Activated CD8-positive, alpha-beta T cell treated with anti-CD3 and anti-CD28 coated beads, Interleukin-2, amount 10 ng/mL, durations not matched to agents 7 days and 5 days (primary cell): ENCODE measurements at regions of chr9 and their contacts with region 1.

Region 1: DNA sequence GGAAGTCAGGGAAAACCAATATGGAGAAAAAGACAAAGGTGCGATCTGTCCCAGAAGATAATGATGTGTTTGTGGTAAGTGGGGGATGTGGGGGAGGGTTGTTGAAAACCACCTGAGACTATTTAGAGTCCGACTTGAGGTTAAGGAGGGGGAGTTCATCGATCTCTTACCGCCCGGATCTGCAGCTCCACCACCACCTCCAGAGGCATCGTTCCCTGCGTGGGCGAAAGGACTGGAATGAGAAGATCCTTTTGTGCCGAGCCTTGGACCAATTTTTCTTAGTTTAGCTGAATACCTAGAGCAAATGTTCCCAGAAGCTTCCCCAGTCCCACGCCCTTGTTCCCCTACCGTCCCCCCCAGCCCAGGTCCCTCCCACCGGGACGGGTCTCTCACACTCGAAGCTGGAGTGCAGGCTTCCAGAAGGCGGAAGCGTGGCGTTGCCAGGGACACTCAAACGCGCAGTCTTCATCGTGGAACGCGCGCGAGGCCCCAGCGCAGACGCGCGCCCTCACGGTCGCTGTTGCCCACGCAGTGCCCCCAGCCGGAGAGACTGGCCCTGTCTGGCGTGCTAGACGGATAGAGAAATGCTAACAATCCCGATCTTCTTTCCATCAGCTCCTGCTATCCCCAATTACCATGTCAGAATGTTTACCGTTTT is at the start of gene SPATA6L:
- DNase-seq: peak; percentile 45
- ATAC-seq: peak; percentile 28
- H3K4me3 Mint-ChIP-seq: peak within 1 kb of the TSS; percentile 73
- H3K27ac Mint-ChIP-seq: no peak within 1 kb of the TSS
- H3K4me1 Mint-ChIP-seq: peaks cover 72% of the 10 kb centered on the region
- H3K27me3 Mint-ChIP-seq: peaks cover 22% of the 10 kb centered on the region
- total RNA-seq, gene SPATA6L: 0.29 to 0.76 TPM

Region 2: DNA sequence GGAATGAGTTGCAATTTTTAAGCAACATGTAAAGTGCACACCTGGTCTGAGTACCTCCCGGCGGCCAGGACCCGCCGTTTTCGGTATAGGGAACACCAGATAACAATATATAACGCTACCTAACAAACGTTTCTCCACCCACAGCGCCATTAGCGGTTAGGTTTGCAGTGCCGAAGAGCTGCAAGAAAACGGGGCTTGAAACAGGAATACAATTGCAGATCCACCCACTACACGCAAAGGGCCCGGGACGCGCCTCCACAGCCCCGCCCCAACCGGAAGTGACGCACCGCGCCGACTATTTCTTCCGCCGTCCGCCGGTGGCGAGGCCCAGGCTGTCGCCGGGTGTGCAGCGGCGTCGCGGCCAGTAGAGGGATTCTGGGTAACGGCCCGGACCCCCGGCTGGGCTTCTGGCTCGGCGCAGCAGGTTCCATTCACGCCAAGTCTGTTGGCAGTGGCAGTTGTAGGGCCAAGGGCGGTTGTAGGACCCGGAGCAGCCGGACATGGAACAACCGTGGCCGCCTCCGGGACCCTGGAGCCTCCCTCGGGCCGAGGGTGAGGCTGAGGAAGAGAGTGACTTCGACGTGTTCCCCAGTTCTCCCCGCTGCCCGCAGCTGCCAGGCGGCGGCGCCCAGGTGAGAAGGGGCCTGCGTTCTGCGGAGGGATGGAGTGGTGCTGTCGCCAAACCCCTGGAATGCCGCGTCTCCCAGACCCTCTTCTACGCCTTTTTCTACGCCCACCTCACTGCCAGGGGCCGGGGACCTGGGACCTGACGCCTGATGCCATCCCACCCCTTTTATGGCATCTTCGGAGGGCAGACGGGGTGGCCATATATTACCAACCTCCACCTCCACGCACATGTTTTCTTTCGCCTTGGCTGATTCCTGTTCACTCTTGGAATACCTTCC is 13.3 kb after region 1 on chr9 and contains the start of gene CDC37L1:
- CTCF ChIA-PET with region 1: interaction called, 8 read pairs
- POLR2A ChIA-PET with region 1: interaction called, 10 read pairs
- DNase-seq: peak; percentile 99
- ATAC-seq: peak; percentile 98
- H3K4me3 Mint-ChIP-seq: no peak within 1 kb of the TSS
- H3K27ac Mint-ChIP-seq: no peak within 1 kb of the TSS
- H3K4me1 Mint-ChIP-seq: no peaks in the 10 kb centered on the region
- H3K27me3 Mint-ChIP-seq: peaks cover 5% of the 10 kb centered on the region
- total RNA-seq, gene CDC37L1: 8.0 to 8.9 TPM

Region 3: DNA sequence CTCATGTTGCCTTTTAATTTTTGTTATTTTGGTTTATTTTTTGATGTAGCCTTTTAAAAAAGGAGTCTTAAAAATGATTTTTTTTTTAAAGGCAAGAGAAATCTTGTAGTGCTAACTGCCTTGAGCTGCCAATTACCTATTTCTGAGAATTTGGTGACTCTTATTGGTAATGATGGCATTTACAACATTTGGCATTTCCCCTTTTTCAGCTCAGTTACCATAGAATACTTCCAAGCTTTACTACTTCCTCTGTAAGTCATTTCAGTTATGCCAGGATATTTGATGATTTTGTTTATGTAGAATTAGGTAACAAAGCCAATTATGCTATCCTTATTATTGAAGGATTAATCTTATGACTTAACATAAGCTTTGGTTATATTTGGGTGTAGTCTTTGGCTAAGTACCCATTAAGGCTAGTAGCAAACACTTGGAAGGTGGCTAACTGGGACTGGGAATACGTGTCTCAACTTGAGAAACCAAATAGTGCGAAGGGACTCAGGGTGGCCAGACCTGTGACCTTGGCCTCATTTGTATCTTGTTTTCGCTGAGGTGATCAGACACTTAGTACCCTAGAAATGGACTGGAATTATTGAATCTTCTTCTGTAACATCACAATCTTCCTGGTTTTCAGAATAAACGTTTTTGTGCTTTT is 40.9 kb after region 1 on chr9:
- CTCF ChIA-PET with region 1: no interaction called
- POLR2A ChIA-PET with region 1: no interaction called
- DNase-seq: no peak
- ATAC-seq: no peak
- H3K4me3 Mint-ChIP-seq: no peak overlapping the region
- H3K27ac Mint-ChIP-seq: no peak overlapping the region
- H3K4me1 Mint-ChIP-seq: peaks cover 7% of the 10 kb centered on the region
- H3K27me3 Mint-ChIP-seq: no peaks in the 10 kb centered on the region